ENCODE measurements at regions of chr2 and their contacts with region 1.

Region 1: DNA sequence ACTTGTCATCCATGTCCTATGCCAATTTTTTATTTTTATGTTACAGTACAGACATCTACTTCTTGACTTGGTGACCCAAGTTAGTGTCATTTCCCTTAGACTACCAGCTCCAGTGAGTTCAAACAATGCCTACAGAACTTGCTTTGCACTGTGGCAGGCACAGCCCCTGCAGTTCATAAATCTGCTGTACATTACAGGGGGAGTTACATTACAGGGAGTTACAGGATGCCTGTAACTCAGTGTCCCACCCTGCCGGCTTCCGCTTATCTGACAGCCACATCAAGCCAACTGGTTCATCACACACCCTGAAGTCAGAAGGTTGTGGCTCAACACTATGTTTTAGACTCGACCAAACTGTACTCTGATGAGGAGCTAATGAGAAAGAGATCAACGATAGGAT is 7.8 kb upstream of the NPAS2 start:
- DNase-seq: no peak

Region 2: DNA sequence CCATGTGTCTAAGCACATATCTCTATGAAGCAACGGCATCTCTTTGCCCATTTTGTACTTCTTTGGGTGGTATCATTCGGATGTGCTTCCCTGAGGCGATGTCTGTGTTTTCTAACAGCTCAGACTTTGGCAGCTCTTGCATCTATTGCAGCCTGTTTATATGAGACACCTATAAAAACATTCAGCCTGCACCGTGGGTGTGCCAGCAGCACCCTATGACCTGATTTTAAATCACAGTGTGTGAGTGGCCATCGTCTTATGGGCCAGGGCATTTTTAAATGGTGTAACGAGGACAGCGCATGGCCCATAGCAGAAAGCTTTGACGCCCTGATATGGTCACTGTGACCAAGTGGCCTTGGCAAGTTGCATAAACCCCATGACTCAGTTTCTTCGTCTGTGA is 20.8 kb after region 1 on chr2:
- CTCF ChIA-PET with region 1: no interaction called
- POLR2A ChIA-PET with region 1: no interaction called
- DNase-seq: no peak

Region 3: DNA sequence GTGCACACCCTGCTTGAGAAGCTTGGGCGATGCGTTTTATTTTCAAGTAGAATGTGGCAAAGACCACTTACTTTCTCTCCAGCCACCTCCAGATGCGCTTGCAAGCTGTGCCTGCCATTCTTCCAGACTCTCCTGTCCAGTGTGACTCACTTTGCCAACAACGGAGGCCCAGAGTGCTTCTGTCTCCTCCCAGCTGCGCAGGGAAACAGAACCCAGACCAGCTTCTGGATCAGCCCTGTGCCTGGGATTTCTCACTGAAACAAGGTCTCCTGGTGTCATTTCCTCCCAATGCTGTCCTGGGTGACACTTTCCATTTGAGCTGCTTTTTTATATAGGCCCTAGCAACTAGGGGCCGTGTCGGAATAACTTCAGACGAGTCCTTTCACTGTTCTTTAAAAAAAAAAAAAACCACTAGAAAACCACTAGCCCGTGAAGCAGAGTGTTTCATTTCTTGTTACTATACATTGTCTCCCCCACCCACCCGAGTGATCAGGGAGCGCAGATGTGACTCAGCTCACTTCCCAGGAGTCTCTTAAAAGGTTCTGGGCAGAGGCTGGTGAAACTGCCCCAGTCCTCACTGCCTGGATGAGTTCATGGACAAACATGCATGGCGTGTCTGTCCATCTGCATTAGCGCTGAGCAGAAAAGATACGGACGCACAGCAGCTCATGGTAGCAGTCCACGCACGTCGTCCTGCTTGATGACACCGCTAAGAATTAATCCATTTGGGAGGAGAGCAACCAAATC is 164.7 kb after region 1 on chr2:
- CTCF ChIA-PET with region 1: interaction called, 10 read pairs
- POLR2A ChIA-PET with region 1: no interaction called
- DNase-seq: no peak